Natural killer cell (primary cell): ENCODE measurements at regions of chr1 and their contacts with region 1.

Region 1: DNA sequence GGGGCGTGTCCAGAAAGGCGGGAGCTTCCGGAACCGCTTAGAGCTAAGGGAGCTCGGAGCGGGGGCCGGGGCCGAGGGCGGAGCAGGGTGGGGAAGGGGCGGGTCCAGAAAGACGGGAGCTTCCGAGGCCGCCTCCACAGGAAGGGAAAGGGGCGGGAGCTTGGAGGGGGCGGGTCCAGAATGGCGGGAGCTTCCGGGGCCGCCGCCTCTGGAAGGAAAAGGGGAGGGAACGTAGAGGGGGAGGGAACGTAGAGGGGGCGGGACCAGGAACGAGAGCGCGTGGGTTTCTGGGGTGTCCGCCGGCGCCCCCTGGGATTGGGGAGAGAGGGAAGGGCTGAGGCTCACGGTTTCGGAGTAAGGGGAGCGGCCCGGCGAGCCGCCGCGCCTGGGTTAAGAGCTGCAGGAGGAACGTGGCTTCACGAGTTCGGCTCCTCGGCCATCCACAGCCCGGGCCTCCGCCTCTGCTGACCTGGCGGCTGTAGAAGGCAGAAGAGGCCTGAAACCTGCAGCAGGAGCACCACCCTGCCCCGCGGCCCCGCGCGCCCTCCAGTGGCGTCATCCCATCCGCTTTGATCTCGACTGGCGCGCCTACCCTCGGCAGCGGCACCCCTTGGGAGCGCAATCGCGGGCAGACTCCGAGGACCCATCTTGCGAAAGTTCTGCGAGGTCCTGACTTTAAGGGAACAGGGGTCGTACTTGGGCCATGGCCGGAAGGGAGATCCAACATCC is 22.9 kb upstream of the HPDL start:
- DNase-seq: peak; percentile 79 to 98
- ATAC-seq: peak; percentile 84 to 95 (median 87)
- H3K4me3 ChIP-seq: peak overlapping the region; percentile 84
- H3K4me3 Mint-ChIP-seq: peak overlapping the region; percentile 91
- H3K27ac ChIP-seq: peak overlapping the region; percentile 93
- H3K27ac Mint-ChIP-seq: peak overlapping the region; percentile 91 to 93
- H3K4me1 ChIP-seq: peaks cover 17% of the 10 kb centered on the region
- H3K4me1 Mint-ChIP-seq: peaks cover 9 to 12% of the 10 kb centered on the region in 2 donors
- H3K27me3 ChIP-seq: no peaks in the 10 kb centered on the region
- H3K27me3 Mint-ChIP-seq: no peaks in the 10 kb centered on the region
- CTCF ChIP-seq: peak; percentile 70

Region 2: DNA sequence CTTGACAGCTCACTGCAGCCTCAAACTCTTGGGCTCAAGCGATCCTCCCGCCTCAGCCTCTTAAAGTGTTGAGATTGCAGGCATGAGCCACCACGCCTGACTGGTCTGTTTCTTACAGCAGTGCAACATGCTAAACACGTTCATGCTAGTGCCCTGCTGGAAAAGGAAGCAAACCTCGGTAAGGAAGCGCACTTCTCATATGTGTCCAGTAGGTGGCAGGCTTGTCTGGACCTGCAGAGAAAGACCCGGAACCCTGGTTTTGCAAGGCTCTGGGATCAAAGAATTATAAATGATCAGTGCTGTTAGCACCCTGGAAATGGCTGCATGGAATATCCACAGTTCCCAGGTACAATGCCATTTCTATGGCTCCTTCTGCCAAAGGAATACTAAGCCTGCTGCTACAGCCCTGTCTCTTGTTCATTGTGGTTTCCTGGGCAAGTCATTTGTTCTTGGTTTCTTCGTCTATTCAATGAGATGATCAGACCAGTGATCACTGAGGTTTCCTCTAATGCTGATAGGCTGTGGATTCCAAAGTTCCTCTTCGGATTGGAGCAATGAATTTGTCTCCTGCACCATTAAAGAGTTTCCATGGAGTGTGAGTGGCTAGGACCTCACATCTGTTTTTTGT is 588.7 kb before region 1 on chr1:
- intact Hi-C with region 1: loop called (anchors 5 kb)
- DNase-seq: peak; percentile 53 to 90
- ATAC-seq: peak; percentile 92 to 98 (median 95)
- H3K4me3 ChIP-seq: no peak overlapping the region
- H3K4me3 Mint-ChIP-seq: peak overlapping the region; percentile 64
- H3K27ac ChIP-seq: peak overlapping the region; percentile 15
- H3K27ac Mint-ChIP-seq: peak overlapping the region; percentile 27 to 48
- H3K4me1 ChIP-seq: peaks cover 14% of the 10 kb centered on the region
- H3K4me1 Mint-ChIP-seq: peaks cover 26 to 30% of the 10 kb centered on the region in 2 donors
- H3K27me3 ChIP-seq: no peaks in the 10 kb centered on the region
- H3K27me3 Mint-ChIP-seq: peaks cover 0 to 5% of the 10 kb centered on the region in 2 donors
- CTCF ChIP-seq: peak; percentile 90

Region 3: DNA sequence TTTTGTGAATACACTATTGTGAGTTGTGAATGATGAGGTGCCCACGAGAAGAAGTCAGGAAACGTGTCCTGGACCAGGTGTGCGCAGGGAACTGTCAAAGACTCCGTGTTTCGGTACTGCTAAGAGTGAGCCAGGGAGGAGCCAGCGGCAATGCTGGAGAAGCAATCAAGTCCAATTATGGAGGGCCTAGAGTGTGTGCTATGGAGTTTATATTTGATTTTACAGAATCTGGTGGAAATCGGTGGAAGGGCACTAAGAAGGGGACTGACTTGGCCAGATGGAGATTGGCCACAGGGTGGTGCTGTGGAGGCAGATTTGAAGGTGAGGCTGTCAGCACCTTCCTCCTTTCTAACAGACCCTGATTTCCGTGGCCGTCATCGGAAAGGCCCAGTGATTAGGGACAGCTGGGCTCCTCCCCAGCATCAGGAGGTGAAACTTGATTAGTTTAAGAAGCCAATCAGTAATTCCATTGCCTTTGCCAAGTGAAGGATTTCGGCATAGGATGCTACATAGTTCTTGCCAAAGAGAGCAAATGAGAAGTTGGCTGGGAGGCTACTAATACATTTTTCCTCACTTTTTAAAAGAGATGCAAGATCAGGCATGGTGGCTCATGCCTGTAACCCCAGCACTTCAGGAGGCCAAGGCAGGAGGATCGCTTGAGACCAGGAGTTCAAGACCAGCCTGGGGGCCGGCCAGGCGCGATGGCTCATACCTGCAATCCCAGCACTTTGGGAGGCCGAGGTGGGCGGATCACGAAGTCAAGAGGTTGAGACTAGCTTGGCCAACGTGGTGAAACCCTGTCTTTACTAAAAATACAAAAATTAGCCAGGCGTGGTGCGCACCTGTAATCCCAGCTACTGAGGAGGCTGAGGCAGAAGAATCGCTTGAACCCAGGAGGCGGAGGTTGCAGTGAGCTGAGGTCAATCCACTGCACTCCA is 467.7 kb before region 1 on chr1:
- intact Hi-C with region 1: loop called (anchors 2 kb)
- DNase-seq: peak; percentile 79 to 90
- ATAC-seq: peak; percentile 90 to 99 (median 97)
- H3K4me3 ChIP-seq: no peak overlapping the region
- H3K4me3 Mint-ChIP-seq: no peak overlapping the region
- H3K27ac ChIP-seq: no peak overlapping the region
- H3K27ac Mint-ChIP-seq: peak overlapping the region in 1 of 2 donors; percentile 63
- H3K4me1 ChIP-seq: peaks cover 6% of the 10 kb centered on the region
- H3K4me1 Mint-ChIP-seq: peaks cover 7% of the 10 kb centered on the region in 2 donors
- H3K27me3 ChIP-seq: no peaks in the 10 kb centered on the region
- H3K27me3 Mint-ChIP-seq: peaks cover under 1 to 5% of the 10 kb centered on the region in 2 donors
- CTCF ChIP-seq: peak; percentile 77

Region 4: GRCh38 chr1:45116340-45116739 is 187.4 kb before region 1 on chr1:
- intact Hi-C with region 1: no loop called
- DNase-seq: peak in 1 of 2 donors; percentile 38
- ATAC-seq: peak in 2 of 3 donors; percentile 46 to 80
- H3K4me3 ChIP-seq: no peak overlapping the region
- H3K4me3 Mint-ChIP-seq: peak overlapping the region; percentile 69
- H3K27ac ChIP-seq: no peak overlapping the region
- H3K27ac Mint-ChIP-seq: peak overlapping the region; percentile 76
- H3K4me1 ChIP-seq: peaks cover 23% of the 10 kb centered on the region
- H3K4me1 Mint-ChIP-seq: peaks cover 25 to 27% of the 10 kb centered on the region in 2 donors
- H3K27me3 ChIP-seq: no peaks in the 10 kb centered on the region
- H3K27me3 Mint-ChIP-seq: peaks cover 0 to 2% of the 10 kb centered on the region in 2 donors
- CTCF ChIP-seq: no peak

Region 5: GRCh38 chr1:45339789-45340570 is 36.2 kb after region 1 on chr1 and contains the starts of genes MUTYH and TOE1:
- intact Hi-C with region 1: loop called (anchors 2 kb)
- DNase-seq: peak; percentile 81 to 93
- ATAC-seq: peak; percentile 82 to 92 (median 85)
- H3K4me3 ChIP-seq: peak within 1 kb of the TSS; percentile 95
- H3K4me3 Mint-ChIP-seq: peak within 1 kb of the TSS; percentile 99
- H3K27ac ChIP-seq: peak within 1 kb of the TSS; percentile 99
- H3K27ac Mint-ChIP-seq: peak within 1 kb of the TSS; percentile 94 to 96
- H3K4me1 ChIP-seq: peaks cover 27% of the 10 kb centered on the region
- H3K4me1 Mint-ChIP-seq: peaks cover 48 to 49% of the 10 kb centered on the region in 2 donors
- H3K27me3 ChIP-seq: no peaks in the 10 kb centered on the region
- H3K27me3 Mint-ChIP-seq: no peaks in the 10 kb centered on the region
- CTCF ChIP-seq: no peak
- total RNA-seq, gene MUTYH: 44.0 to 55.6 (median 51.5) TPM
- total RNA-seq, gene TOE1: 23.2 to 36.8 (median 28.2) TPM

Region 6: DNA sequence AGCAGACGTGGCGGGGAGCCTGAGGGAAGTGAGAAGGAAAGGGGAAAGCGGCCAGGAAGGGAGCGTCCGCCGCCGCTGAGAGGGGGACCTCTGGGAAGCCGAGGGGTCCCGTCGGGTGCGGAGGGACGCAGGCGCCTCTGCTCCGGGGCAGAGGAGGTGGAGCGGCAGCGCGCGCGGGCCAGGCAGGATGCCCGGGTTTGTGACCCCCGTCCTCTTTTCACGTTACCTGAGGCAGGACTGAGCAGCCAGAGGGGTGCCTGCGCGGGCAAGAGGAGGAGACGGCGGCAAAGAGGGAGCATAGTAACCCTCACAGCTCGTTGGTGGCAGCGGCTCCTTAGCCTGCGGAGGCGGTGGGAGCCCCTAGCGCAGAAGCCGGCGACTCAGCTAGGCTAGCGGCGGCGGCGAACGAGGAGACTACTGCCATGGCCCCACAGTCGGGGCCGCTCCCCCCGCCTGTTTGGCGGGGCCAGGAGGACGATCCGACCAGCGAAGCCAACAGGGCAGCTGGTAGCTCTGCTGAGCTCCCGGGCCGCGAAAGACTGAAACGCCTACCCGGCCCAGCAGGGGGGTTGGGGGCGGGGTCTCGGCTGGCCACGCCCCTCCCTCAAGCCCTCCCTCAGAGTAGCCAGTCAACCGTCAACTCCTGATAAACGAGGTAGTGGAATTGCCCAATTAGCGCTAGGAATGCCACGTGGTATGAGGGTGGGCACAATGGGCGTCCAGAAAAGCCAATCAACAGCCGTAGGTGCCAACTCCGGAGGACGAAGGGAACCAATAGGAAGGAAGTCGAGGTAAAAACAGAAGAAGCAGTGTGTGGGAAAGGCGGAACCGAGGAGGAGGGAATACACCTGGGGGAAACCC is 187.1 kb after region 1 on chr1 and contains the start of gene TESK2:
- intact Hi-C with region 1: loop called (anchors 2 kb)
- DNase-seq: peak; percentile 97 to 99
- ATAC-seq: peak; percentile 91 to 99 (median 92)
- H3K4me3 ChIP-seq: peak within 1 kb of the TSS; percentile 73
- H3K4me3 Mint-ChIP-seq: no peak within 1 kb of the TSS
- H3K27ac ChIP-seq: peak within 1 kb of the TSS; percentile 65
- H3K27ac Mint-ChIP-seq: no peak within 1 kb of the TSS
- H3K4me1 ChIP-seq: peaks cover 18% of the 10 kb centered on the region
- H3K4me1 Mint-ChIP-seq: peaks cover 5 to 6% of the 10 kb centered on the region in 2 donors
- H3K27me3 ChIP-seq: no peaks in the 10 kb centered on the region
- H3K27me3 Mint-ChIP-seq: no peaks in the 10 kb centered on the region
- CTCF ChIP-seq: no peak
- total RNA-seq, gene TESK2: 5.1 to 7.4 (median 6.0) TPM